ENCODE measurements at regions of chr3 and their contacts with region 1.

Region 1: DNA sequence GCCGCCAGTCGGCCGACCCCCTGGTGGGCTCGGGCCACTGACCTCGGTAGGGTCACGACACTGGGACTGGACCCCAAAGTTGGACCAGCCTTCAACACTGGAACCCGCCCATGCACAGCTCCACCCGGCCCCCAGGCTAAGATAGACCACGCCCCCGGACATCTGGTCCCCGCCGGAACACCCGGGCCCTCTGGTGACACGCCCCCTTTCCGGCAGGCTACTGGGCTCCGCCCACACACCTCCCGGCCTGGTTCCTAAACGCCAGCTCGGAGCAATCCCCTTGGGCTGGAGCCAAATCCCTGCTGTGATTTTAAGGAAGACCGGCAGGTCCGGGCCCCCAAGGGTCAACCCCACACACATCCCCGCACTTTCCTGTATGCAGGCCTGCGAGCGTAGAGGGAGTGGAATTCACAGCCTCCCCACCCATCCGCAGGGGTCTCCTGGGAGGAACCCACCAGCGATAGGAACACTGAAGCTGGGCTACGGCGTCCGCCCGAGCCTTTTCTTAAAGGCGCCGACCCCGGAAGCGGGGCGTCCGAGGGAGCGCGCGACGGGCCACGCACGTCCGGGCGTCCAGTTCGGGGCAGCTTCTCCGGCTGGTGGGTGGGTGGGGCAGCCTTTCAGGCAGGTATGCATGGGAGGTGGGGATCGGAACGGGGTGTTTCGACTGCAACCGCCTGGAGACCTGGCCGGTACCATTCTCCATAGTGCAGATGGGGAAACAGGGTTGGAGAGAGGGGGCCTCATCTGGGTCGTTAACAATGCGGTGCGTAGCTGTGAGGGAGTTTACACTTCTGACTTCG is at the start of gene HEMK1:
- DNase-seq: peak; percentile 99
- H3K4me3 ChIP-seq: peak within 1 kb of the TSS; percentile 71 to 81
- H3K27ac ChIP-seq: peak within 1 kb of the TSS; percentile 86 to 96
- H3K4me1 ChIP-seq: peaks cover 0 to 22% of the 10 kb centered on the region in 2 experiments; a peak in 1 of 4 replicates
- H3K27me3 ChIP-seq: no peaks in the 10 kb centered on the region
- CTCF ChIP-seq: no peak
- EP300 ChIP-seq: peak in 1 of 2 experiments; percentile 48; a peak in 1 of 4 replicates
- RAD21 ChIP-seq: no peak
- polyA plus RNA-seq, gene HEMK1: 15.4 and 21.7 TPM in 2 replicates

Region 2: GRCh38 chr3:50557915-50558314 is 11.2 kb before region 1 on chr3:
- CTCF ChIA-PET with region 1: interaction called, 10 read pairs
- POLR2A ChIA-PET with region 1: interaction called, 4 read pairs
- DNase-seq: no peak
- H3K4me3 ChIP-seq: no peak overlapping the region
- H3K27ac ChIP-seq: no peak overlapping the region
- H3K4me1 ChIP-seq: peaks cover 0 to under 1% of the 10 kb centered on the region in 2 experiments; a peak in 1 of 4 replicates
- H3K27me3 ChIP-seq: no peaks in the 10 kb centered on the region
- CTCF ChIP-seq: no peak
- EP300 ChIP-seq: no peak
- RAD21 ChIP-seq: no peak

Region 3: DNA sequence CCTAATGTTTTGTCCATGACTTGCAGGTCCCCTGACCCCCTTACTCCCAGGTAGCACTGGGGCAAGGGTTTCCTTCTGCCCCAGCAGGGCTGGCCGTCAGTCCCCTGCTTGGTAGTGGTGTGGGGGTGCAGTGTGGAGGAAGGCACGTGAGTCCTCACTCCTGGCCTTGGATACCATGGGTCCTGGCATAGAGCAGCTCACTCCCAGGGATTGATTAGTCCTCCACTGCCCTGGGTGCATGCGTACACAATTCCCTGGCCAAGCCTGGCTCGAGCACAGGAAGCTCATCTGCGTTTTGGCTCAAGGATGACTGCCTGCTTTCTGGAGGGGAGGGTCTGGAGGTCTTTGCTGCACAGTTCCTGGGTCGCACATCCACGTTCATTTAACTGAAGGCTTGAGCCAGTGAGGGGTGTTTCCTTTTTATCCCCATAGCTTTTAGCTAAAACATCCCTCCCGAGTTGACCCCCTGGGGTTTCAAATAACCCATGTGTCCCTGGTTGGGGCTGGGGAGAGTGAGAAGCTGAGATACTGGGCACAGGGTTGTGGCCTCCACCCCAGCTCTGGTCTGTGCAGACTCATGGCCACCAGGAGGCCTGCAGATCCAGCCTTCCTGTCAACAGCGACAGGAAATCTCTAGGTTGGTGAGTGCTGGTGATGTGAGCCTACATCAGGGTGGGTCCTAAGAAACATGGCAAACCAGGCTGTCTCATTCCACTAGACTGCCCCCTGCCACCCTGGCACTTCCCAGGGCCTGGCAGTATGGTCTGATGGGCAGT is 11.7 kb after region 1 on chr3:
- CTCF ChIA-PET with region 1: interaction called, 24 read pairs
- POLR2A ChIA-PET with region 1: interaction called, 3 read pairs
- DNase-seq: no peak
- H3K4me3 ChIP-seq: no peak overlapping the region
- H3K27ac ChIP-seq: no peak overlapping the region
- H3K4me1 ChIP-seq: no peaks in the 10 kb centered on the region
- H3K27me3 ChIP-seq: no peaks in the 10 kb centered on the region
- CTCF ChIP-seq: no peak
- EP300 ChIP-seq: no peak
- RAD21 ChIP-seq: no peak

Region 4: GRCh38 chr3:50587806-50588758 is 18.9 kb after region 1 on chr3:
- CTCF ChIA-PET with region 1: interaction called, 24 read pairs
- POLR2A ChIA-PET with region 1: interaction called, 9 read pairs
- DNase-seq: no peak
- H3K4me3 ChIP-seq: no peak overlapping the region
- H3K27ac ChIP-seq: no peak overlapping the region
- H3K4me1 ChIP-seq: peaks cover 0 to 5% of the 10 kb centered on the region in 2 experiments; a peak in 1 of 4 replicates
- H3K27me3 ChIP-seq: no peaks in the 10 kb centered on the region
- CTCF ChIP-seq: no peak
- EP300 ChIP-seq: no peak
- RAD21 ChIP-seq: no peak

Region 5: DNA sequence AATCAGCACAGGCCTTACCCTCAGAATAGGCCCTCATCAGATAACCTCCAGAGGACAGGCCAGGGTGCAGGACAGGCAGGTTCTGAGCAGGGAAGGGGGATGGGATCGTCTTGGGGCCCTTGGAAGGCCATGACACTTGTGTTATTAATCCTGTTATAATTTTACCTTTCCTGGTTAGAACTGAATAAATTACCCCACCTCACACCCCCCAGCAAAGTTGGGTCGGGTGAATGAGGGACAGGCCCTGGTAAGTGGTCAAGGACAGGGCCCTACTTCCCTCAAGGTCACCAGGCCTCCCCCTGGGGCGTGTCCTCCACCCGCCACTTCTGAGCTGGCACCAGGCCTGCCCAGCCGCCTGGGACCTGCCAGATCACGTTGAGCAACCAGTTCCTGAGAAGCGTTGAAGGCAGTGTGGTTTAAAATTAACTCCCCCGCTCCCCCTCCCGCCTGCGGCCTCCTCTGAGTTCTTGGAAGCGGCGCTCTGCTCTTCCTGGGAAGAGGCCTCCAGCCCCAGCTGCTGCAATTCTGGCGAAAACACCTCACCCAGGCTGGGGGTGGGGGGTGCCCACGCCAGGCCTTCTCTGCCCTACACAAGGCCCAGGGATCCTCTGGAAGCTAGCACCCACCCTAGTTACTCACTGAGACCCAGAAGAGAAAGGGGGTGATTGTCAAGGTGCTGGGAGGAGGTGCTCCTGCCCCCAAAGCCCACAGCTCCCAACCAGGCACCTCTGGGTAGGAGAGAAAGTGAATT is 31.9 kb after region 1 on chr3:
- CTCF ChIA-PET with region 1: interaction called, 648 read pairs
- POLR2A ChIA-PET with region 1: interaction called, 23 read pairs
- DNase-seq: peak; percentile 91
- H3K4me3 ChIP-seq: no peak overlapping the region; a peak in 1 of 4 replicates
- H3K27ac ChIP-seq: peak overlapping the region; percentile 70 to 93
- H3K4me1 ChIP-seq: peaks cover 17 to 38% of the 10 kb centered on the region in 2 experiments
- H3K27me3 ChIP-seq: no peaks in the 10 kb centered on the region
- CTCF ChIP-seq: no peak
- EP300 ChIP-seq: peak; percentile 60 to 75; a peak in 3 of 4 replicates
- RAD21 ChIP-seq: peak; percentile 16; the same call in 1 of the 2 replicates

Region 6: GRCh38 chr3:50652709-50653108 is 83.6 kb after region 1 on chr3:
- CTCF ChIA-PET with region 1: interaction called, 12 read pairs
- POLR2A ChIA-PET with region 1: no interaction called
- DNase-seq: peak; percentile 45
- H3K4me3 ChIP-seq: no peak overlapping the region
- H3K27ac ChIP-seq: no peak overlapping the region
- H3K4me1 ChIP-seq: peaks cover 0 to 31% of the 10 kb centered on the region in 2 experiments; a peak in 1 of 4 replicates
- H3K27me3 ChIP-seq: no peaks in the 10 kb centered on the region
- CTCF ChIP-seq: peak; percentile 49
- EP300 ChIP-seq: no peak
- RAD21 ChIP-seq: peak; percentile 58

Region 7: GRCh38 chr3:50696276-50696675 is 127.1 kb after region 1 on chr3:
- CTCF ChIA-PET with region 1: no interaction called
- POLR2A ChIA-PET with region 1: no interaction called
- DNase-seq: no peak
- H3K4me3 ChIP-seq: no peak overlapping the region
- H3K27ac ChIP-seq: no peak overlapping the region
- H3K4me1 ChIP-seq: no peaks in the 10 kb centered on the region
- H3K27me3 ChIP-seq: no peaks in the 10 kb centered on the region; the same call in 1 of the 2 replicates
- CTCF ChIP-seq: no peak
- EP300 ChIP-seq: no peak
- RAD21 ChIP-seq: no peak